ENCODE measurements at regions of chr3 and their contacts with region 1.

Region 1: GRCh38 chr3:196684548-196685407 is 27.3 kb downstream of the CEP19 start:
- DNase-seq: peak; percentile 34
- ATAC-seq: peak; percentile 86
- H3K4me3 ChIP-seq: no peak overlapping the region
- H3K27ac ChIP-seq: no peak overlapping the region
- H3K4me1 ChIP-seq: peaks cover 0 to 11% of the 10 kb centered on the region in 2 experiments; a peak in 2 of 4 replicates
- H3K27me3 ChIP-seq: no peaks in the 10 kb centered on the region
- CTCF ChIP-seq: peak; percentile 76 to 92 (median 86)
- POLR2A ChIP-seq: no peak
- RAD21 ChIP-seq: peak; percentile 88

Region 2: GRCh38 chr3:196528639-196529233 is 156.0 kb before region 1 on chr3:
- CTCF ChIA-PET with region 1: interaction called, 10 read pairs
- POLR2A ChIA-PET with region 1: no interaction called
- RAD21 ChIA-PET with region 1: no interaction called
- intact Hi-C with region 1: loop called (anchors 2 kb)
- DNase-seq: peak; percentile 42
- ATAC-seq: peak; percentile 96
- H3K4me3 ChIP-seq: peak overlapping the region; percentile 45 to 54
- H3K27ac ChIP-seq: peak overlapping the region; percentile 12; the same call in 1 of the 2 replicates
- H3K4me1 ChIP-seq: peaks cover 5 to 27% of the 10 kb centered on the region in 2 experiments; a peak in 3 of 4 replicates
- H3K27me3 ChIP-seq: no peaks in the 10 kb centered on the region
- CTCF ChIP-seq: peak; percentile 53 to 84 (median 73); a peak in 5 of 6 replicates
- POLR2A ChIP-seq: peak; percentile 75
- RAD21 ChIP-seq: peak; percentile 57

Region 3: GRCh38 chr3:196537319-196537984 is 147.3 kb before region 1 on chr3:
- CTCF ChIA-PET with region 1: no interaction called
- POLR2A ChIA-PET with region 1: no interaction called
- RAD21 ChIA-PET with region 1: no interaction called
- intact Hi-C with region 1: loop called (anchors 2 kb)
- DNase-seq: no peak
- ATAC-seq: no peak
- H3K4me3 ChIP-seq: no peak overlapping the region
- H3K27ac ChIP-seq: no peak overlapping the region
- H3K4me1 ChIP-seq: no peaks in the 10 kb centered on the region
- H3K27me3 ChIP-seq: no peaks in the 10 kb centered on the region
- CTCF ChIP-seq: peak; percentile 42 to 73 (median 61); a peak in 5 of 6 replicates
- POLR2A ChIP-seq: no peak
- RAD21 ChIP-seq: peak; percentile 59

Region 4: DNA sequence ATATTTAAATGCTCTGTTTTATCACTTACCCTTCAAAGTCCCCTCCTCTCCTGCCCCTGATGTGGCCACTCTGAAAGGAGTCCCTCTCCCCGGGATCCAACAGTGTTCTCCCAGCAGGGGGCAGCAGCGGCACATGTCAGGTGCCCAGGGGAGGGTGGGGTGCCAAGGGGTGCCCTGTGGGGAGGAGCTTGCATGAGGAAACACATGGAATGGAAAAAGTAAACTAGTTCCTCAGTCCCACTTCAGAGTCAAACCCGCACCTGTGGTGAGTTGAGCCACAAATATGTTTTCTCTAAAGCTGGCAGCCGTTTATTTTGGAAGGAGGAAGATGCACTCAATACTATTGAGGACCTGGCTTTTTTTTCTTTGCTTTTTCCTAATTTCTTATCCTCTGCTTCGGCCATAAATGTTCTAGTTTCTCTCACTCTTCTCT is 75.4 kb before region 1 on chr3:
- CTCF ChIA-PET with region 1: interaction called, 62 read pairs
- POLR2A ChIA-PET with region 1: interaction called, 6 read pairs
- RAD21 ChIA-PET with region 1: interaction called, 11 to 14 read pairs
- intact Hi-C with region 1: loop called (anchors 1 kb)
- DNase-seq: peak; percentile 78
- ATAC-seq: peak; percentile 96
- H3K4me3 ChIP-seq: no peak overlapping the region
- H3K27ac ChIP-seq: no peak overlapping the region
- H3K4me1 ChIP-seq: peaks cover 22 to 41% of the 10 kb centered on the region in 2 experiments; a peak in 3 of 4 replicates
- H3K27me3 ChIP-seq: no peaks in the 10 kb centered on the region
- CTCF ChIP-seq: peak; percentile 85 to 97 (median 95)
- POLR2A ChIP-seq: no peak
- RAD21 ChIP-seq: peak; percentile 98

Region 5: GRCh38 chr3:197372047-197372666 is 687.4 kb after region 1 on chr3:
- CTCF ChIA-PET with region 1: no interaction called
- POLR2A ChIA-PET with region 1: no interaction called
- RAD21 ChIA-PET with region 1: no interaction called
- intact Hi-C with region 1: no loop called
- DNase-seq: no peak
- ATAC-seq: peak; percentile 73
- H3K4me3 ChIP-seq: peak overlapping the region in 1 of 2 experiments; percentile 23; a peak in 1 of 4 replicates
- H3K27ac ChIP-seq: no peak overlapping the region
- H3K4me1 ChIP-seq: peaks cover 11 to 16% of the 10 kb centered on the region in 2 experiments
- H3K27me3 ChIP-seq: no peaks in the 10 kb centered on the region
- CTCF ChIP-seq: no peak
- POLR2A ChIP-seq: no peak
- RAD21 ChIP-seq: no peak